Activated CD4-positive, alpha-beta memory T cell treated with anti-CD3 and anti-CD28 coated beads for 36 hours (primary cell): ENCODE measurements at regions of chr11 and their contacts with region 1.

Region 1: DNA sequence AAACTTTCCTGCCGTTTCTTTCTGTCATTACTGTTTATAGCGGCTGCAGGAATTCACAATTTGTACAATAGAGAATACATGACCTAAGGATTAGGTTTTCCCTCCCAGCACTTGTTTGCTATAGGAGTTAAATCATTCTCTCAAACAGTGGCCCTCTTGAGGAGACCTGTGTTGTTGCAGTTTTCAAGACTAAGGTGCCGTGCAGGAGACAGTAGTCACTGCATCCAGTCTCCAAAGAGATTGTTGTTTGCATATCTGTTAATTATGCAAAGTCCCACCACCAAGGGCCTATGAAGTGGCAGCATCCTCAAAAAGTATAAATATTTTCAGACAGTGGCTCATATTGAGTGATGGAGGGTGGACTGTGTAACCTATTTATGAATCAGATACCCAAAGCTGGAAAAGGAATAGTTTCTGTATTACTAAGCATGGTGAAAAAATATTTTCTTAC is 2.3 kb downstream of the PRSS23 start:
- DNase-seq: peak; percentile 27
- H3K4me3 Mint-ChIP-seq: no peak overlapping the region
- H3K27ac Mint-ChIP-seq: no peak overlapping the region
- H3K4me1 Mint-ChIP-seq: peaks cover 57% of the 10 kb centered on the region
- H3K27me3 Mint-ChIP-seq: peaks cover 51% of the 10 kb centered on the region

Region 2: DNA sequence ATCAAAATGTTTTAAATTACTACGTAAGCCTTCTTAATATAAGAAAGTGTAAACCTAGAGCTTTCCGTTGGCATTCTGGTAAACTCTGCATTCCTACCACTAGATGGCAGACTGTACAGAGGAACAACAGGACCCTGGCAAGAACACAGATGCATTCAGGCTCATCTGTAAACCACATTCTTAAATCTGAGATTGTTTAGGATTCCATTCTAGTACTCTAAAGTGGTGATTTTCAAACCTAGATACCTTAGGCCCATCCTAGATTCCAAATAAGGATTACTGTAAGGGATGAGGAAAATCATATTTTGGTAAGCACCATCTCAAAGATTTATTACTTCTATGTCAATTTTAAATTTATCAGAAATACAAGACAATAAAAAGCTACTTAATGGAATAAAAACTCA is 760.6 kb before region 1 on chr11:
- CTCF ChIA-PET with region 1: no interaction called
- POLR2A ChIA-PET with region 1: no interaction called
- intact Hi-C with region 1: loop called (anchors 10 kb)
- DNase-seq: peak; percentile 48
- H3K4me3 Mint-ChIP-seq: no peak overlapping the region
- H3K27ac Mint-ChIP-seq: peak overlapping the region; percentile 58
- H3K4me1 Mint-ChIP-seq: peaks cover 71% of the 10 kb centered on the region
- H3K27me3 Mint-ChIP-seq: no peaks in the 10 kb centered on the region

Region 3: DNA sequence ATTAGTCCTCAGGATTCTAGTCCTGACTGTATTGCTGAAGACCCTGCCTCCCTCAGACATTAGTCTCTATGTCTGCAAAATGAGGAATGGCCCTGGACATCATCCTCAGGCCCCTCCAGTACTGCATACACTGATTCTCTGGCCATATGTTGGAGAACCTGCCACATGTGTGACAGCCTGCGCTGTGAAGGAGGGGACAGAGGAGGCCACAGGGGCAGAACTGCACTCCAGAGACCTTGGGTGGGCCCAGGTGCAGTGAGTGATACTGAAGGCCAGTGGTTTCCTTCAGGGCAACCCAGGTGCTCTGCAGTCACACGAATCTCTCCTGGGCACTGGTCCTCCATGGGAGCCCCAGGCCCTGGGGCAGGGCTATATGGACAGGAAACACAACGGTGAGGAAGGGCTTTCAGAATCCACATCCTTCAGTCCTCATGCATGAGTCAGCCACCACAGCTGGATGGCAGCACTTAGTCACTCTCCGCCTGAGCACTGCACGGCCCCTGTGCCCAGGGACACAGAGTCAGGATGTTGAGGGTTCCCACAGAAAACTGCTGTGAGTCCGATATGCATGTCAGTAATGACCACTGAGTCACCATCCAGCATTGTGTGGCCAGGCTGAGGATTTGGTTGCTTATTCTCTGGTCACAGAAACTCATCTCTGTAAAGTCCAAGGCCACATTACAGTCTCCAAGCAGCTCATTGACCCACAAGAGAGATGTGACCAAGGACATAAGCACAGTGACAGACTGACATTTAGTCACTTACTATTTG is 169.9 kb before region 1 on chr11:
- CTCF ChIA-PET with region 1: no interaction called
- POLR2A ChIA-PET with region 1: no interaction called
- intact Hi-C with region 1: loop called (anchors 1 kb)
- DNase-seq: peak; percentile 73
- H3K4me3 Mint-ChIP-seq: no peak overlapping the region
- H3K27ac Mint-ChIP-seq: no peak overlapping the region
- H3K4me1 Mint-ChIP-seq: peaks cover 3% of the 10 kb centered on the region
- H3K27me3 Mint-ChIP-seq: peaks cover 10% of the 10 kb centered on the region

Region 4: GRCh38 chr11:86688398-86689179 is 114.0 kb before region 1 on chr11:
- CTCF ChIA-PET with region 1: no interaction called
- POLR2A ChIA-PET with region 1: interaction called, 4 read pairs
- intact Hi-C with region 1: loop called (anchors 1 kb)
- DNase-seq: peak; percentile 61
- H3K4me3 Mint-ChIP-seq: no peak overlapping the region
- H3K27ac Mint-ChIP-seq: peak overlapping the region; percentile 83
- H3K4me1 Mint-ChIP-seq: peaks cover 20% of the 10 kb centered on the region
- H3K27me3 Mint-ChIP-seq: peaks cover 9% of the 10 kb centered on the region